ENCODE measurements at regions of chr17 and their contacts with region 1.

Region 1: DNA sequence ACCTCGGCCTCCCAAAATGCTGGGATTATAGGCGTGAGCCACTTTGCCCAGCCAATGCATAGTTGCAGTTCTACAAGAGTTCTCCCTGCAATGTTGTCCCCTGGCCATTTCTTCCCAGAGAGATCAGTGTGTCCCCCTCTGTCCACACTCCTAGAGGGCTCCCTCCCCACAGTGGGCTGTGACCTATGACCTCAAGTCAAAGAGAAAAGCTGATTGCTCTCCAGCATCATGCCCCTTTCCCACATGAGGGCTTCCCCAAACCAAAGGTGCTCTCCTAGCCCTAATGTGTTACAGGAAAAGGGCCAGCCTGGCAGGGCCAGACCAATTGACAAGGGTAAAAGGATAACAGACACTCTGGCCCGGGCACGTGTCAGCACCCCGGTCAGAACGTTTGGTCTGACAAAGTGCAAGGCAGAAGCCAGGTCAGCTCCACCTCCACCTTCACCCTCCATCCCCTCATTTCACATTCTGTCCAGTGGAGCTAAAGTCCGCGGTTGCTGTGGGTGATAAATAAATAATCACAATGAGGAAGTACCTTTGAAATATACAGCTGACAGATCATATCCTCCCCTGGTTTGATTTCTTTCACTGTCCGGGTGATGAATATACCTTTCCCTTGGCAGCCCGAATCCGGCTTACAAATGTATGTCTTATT is 17.8 kb downstream of the TTLL6 start:
- DNase-seq: no peak
- H3K4me3 ChIP-seq: no peak overlapping the region
- H3K27ac ChIP-seq: no peak overlapping the region
- H3K4me1 ChIP-seq: peaks cover 0 to 18% of the 10 kb centered on the region in 2 experiments; a peak in 2 of 4 replicates
- H3K27me3 ChIP-seq: 0 out of 2 replicates have a peak, but pooled peaks cover 3% of the 10 kb centered on the region
- CTCF ChIP-seq: no peak
- EP300 ChIP-seq: no peak
- RAD21 ChIP-seq: no peak

Region 2: DNA sequence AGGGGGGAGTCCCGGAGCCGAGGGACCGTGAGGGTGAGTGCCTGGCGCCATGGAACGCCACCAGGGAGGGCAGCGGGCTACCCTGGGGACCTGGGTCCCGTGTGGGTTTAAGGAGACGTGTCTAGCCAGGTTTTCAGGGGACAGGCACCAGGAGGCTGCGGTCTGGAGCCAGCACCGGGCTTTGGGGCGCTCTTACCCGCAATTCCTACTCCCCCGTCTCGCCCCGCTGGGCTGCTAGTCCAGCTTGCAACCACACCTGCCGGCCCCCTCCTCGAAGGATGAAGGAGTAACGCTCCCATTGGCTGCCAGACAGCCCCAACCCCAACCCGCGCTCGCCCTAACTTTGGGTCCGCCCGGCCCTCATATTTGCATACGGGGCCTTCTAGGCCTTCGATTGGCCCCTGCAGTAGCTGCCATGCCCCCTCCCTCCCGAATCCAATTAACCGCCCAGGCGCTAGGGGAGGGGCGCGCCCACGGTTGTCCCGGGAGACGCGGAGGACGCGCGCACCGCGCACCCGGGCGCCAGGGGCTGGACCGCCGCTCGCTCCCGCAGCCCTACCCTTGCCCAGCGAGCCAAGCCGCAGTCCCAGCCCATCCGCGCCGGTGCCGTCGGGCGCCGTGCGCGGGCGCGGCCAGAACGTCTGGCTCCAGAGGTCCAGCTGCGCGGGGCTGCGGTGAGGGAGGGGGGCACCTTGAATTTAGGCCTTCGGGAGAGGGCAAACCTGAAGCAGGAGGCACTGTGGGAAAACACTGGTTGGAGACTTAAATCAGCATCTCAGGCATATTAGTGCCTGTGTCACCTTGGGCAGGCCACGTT is 17.8 kb after region 1 on chr17 and contains the start of gene TTLL6:
- CTCF ChIA-PET with region 1: interaction called, 74 read pairs
- POLR2A ChIA-PET with region 1: no interaction called
- DNase-seq: peak; percentile 97
- H3K4me3 ChIP-seq: peak within 1 kb of the TSS; percentile 45 to 62
- H3K27ac ChIP-seq: no peak within 1 kb of the TSS
- H3K4me1 ChIP-seq: peaks cover 0 to 9% of the 10 kb centered on the region in 2 experiments; a peak in 1 of 4 replicates
- H3K27me3 ChIP-seq: peaks cover 35% of the 10 kb centered on the region; the same call in 1 of the 2 replicates
- CTCF ChIP-seq: no peak
- EP300 ChIP-seq: no peak
- RAD21 ChIP-seq: no peak
- polyA plus RNA-seq, gene TTLL6: 3.1 and 5.1 TPM in 2 replicates

Region 3: GRCh38 chr17:48944519-48945260 is 145.5 kb after region 1 on chr17 and contains the start of gene SNF8:
- CTCF ChIA-PET with region 1: no interaction called
- POLR2A ChIA-PET with region 1: no interaction called
- DNase-seq: peak; percentile 99
- H3K4me3 ChIP-seq: peak within 1 kb of the TSS; percentile 64 to 85
- H3K27ac ChIP-seq: peak within 1 kb of the TSS; percentile 73 to 74
- H3K4me1 ChIP-seq: peaks cover 0 to 11% of the 10 kb centered on the region in 2 experiments; a peak in 1 of 4 replicates
- H3K27me3 ChIP-seq: no peaks in the 10 kb centered on the region
- CTCF ChIP-seq: no peak
- EP300 ChIP-seq: peak in 1 of 2 experiments; percentile 23; a peak in 1 of 4 replicates
- RAD21 ChIP-seq: no peak
- polyA plus RNA-seq, gene SNF8: 329 and 358 TPM in 2 replicates